Right ventricle myocardium inferior (tissue), 1 donor: ENCODE measurements at regions of chr16 and their contacts with region 1.

Region 1: GRCh38 chr16:4852207-4852872 is 5.1 kb downstream of the UBN1 start:
- DNase-seq: no peak
- ATAC-seq: no peak

Region 2: DNA sequence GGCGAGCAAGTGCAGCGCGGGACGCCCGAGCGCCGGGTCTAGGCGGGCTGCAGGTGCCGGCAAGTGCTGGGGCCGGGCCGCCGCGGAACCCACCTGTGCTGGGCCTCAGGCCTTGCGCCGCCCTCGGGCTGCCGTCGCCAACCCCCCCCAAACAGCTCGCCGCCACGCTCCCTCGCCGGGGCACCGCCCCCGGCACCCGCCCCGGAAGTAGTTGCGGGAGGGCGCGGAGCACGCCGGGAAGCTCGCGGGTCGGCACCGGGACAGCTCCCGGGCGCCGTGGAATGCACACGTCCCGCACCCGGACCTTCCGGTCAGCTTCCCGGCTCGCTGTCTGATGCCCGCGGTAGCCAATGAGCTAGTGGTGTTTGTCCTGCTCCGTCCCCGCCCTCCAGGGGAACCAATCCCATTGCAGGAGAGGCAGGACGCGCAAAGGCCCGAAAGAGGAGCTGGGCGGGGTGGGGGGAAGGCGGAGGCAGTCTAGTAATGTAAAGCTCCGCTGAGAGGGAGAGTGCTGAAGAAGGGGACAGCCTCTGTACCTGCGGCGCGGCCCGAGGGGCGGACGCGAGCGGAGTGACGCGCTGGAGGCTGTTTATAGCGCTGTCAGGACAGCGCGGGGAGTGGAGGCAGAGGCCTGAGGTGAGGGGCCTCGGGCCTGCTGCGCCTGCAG is 118.1 kb before region 1 on chr16 and contains the starts of genes ANKS3 and DNAAF8:
- intact Hi-C with region 1: loop called (anchors 10 kb)
- DNase-seq: peak; percentile 97
- ATAC-seq: peak; percentile 98
- total RNA-seq, gene ANKS3: 9.1 TPM
- total RNA-seq, gene DNAAF8: 1.5 TPM

Region 3: DNA sequence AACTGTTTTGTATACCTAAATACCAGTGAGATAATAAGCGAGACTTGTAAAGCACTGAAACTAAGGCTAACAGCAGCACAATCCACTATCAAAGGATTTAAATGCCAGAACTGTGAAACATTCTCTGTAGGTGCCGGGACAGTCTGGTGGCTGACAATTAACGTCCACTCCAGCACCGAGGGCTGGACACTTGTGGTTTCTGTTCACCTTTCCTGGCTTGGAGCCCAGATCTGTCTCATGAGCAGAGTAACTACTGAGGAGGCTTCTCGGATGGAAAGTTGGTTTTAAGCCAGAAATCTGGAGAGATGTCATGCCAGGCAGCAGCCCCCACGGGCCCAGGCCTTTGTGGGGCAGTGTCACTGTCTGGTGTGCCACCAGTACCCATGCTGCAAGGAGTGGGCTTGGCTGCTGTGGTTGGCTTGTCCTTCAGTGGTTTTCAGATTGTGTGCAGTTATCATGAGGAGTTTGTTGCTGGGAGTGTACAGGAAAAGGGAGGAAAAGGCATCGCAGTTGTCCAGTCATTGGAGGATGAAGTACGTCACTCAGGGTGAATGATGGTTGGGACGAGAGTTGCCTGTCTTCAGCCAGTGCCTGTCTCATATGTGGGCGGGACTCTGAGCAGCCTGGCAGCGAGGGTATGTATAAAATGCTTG is 30.4 kb after region 1 on chr16:
- intact Hi-C with region 1: no loop called
- DNase-seq: no peak
- ATAC-seq: peak; percentile 58